A549 (cell line): ENCODE measurements at regions of chr18 and their contacts with region 1.

Region 1: GRCh38 chr18:59697236-59697932 is at the start of gene CCBE1:
- DNase-seq: peak; percentile 42 to 67
- ATAC-seq: peak; percentile 91 to 95
- H3K4me3 ChIP-seq: peak within 1 kb of the TSS; percentile 64
- H3K27ac ChIP-seq: peak within 1 kb of the TSS; percentile 72 to 87
- H3K4me1 ChIP-seq: 0 out of 3 replicates have a peak, but pooled peaks cover 3% of the 10 kb centered on the region
- CTCF ChIP-seq: peak; percentile 83
- EP300 ChIP-seq: no peak
- POLR2A ChIP-seq: no peak
- RAD21 ChIP-seq: peak; percentile 45 to 64
- polyA plus RNA-seq, gene CCBE1: 3.0 and 4.3 TPM in 2 replicates

Region 2: DNA sequence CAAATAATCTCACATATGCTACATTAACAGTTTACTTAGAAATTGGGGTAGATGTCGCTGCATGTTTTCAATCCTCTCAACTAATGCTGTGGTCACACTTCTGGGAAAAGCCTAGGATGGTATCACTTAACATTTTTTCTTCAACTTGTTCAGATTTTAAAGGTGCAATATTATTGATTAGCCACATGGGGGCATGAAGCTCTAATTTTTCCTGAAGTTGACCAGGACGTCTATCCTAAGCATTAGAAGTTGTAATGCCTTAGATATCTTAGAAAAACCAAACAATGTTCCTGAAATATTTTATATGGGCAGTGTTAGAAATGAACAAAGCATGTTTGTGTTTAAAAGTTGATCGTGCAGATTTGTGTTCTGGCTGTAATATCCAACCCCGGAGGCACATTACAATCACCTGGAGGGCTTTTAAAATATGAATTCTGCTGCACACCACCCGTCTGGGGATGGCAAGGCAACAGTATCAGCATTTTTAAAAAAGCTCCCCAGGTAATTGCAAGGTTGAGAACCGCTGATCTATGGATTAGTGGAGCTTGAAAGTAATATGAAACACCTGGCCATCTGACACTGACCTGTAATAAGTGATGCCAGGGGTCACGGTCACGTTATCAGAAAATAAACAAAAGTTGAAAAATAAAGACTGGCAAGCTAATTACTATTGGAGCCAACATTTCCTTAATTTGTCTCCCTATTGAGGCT is 237.9 kb before region 1 on chr18:
- CTCF ChIA-PET with region 1: interaction called, 26 read pairs
- POLR2A ChIA-PET with region 1: no interaction called
- DNase-seq: peak; percentile 17 to 30
- ATAC-seq: peak; percentile 40 to 60; a peak in 3 of 6 replicates
- H3K4me3 ChIP-seq: no peak overlapping the region
- H3K27ac ChIP-seq: no peak overlapping the region
- H3K4me1 ChIP-seq: no peaks in the 10 kb centered on the region
- CTCF ChIP-seq: peak; percentile 56
- EP300 ChIP-seq: no peak
- POLR2A ChIP-seq: no peak
- RAD21 ChIP-seq: peak; percentile 65 to 69

Region 3: DNA sequence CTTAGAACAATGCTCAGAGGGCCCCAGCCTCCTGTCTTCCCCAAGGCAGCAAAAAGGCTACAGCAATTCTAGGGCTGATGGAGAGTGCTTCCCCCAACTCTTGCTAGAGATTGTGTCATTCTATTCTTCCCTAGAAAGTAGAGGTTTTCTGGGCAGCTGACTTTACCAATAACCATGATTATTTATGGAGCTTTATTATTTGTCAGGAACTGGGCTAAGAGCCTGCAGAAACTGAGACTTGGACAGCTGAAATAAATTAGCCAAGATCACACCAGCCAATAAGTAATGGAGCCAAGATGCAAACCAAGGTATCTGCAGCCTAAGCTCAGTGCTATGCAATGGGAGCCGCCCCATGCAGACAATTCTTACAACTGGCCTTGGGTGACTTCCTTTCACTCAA is 85.0 kb before region 1 on chr18:
- CTCF ChIA-PET with region 1: no interaction called
- POLR2A ChIA-PET with region 1: no interaction called
- DNase-seq: no peak
- ATAC-seq: no peak
- H3K4me3 ChIP-seq: no peak overlapping the region
- H3K27ac ChIP-seq: no peak overlapping the region
- H3K4me1 ChIP-seq: no peaks in the 10 kb centered on the region
- CTCF ChIP-seq: no peak
- EP300 ChIP-seq: no peak
- POLR2A ChIP-seq: no peak
- RAD21 ChIP-seq: no peak

Region 4: DNA sequence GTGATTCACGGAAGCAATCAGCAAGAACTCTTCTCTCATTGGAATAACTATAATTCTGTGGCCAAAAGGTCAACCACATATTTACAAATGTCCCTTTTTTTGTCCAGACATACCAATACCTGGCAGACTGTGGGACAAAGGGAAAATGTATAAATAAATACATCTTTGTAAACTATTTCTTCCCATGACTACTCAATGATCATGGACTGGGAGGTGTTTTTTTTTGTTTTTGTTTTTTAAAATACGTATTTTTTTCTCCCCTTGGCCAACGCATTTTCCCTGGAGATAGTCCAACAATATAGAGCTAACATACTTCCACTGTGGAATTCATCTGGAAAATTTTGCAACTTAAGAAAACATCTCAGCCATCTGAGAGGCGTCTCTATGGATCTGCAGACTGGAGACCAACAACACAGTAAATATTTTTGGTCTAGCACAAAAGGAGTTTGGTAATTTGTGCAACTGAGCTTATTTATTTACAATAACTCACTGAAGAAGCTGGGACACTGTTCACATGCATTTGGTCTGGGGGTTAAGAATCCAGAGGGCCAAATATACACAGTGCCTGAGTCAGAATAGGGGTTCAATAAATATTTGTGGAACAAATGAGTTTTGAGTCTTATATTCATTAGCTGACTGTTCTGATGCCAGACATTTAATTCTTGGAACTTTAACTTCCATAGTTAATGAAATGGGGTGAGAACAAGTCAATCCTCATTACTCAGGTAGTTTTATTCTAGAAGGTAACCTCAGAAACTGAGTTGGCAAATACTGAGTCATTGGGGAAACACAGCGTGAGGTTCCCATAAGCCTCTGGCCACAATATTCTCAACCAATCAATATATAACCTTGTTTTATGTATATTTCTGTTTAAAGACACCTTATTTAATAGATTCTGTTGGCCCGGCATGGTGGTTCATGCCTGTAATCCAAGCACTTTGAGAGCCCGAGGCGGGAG is 36.3 kb before region 1 on chr18:
- CTCF ChIA-PET with region 1: interaction called, 13 read pairs
- POLR2A ChIA-PET with region 1: no interaction called
- DNase-seq: no peak
- ATAC-seq: no peak
- H3K4me3 ChIP-seq: no peak overlapping the region
- H3K27ac ChIP-seq: no peak overlapping the region
- H3K4me1 ChIP-seq: peaks cover 4% of the 10 kb centered on the region; the same call in 1 of the 3 replicates
- CTCF ChIP-seq: no peak
- EP300 ChIP-seq: no peak
- POLR2A ChIP-seq: no peak
- RAD21 ChIP-seq: no peak

Region 5: DNA sequence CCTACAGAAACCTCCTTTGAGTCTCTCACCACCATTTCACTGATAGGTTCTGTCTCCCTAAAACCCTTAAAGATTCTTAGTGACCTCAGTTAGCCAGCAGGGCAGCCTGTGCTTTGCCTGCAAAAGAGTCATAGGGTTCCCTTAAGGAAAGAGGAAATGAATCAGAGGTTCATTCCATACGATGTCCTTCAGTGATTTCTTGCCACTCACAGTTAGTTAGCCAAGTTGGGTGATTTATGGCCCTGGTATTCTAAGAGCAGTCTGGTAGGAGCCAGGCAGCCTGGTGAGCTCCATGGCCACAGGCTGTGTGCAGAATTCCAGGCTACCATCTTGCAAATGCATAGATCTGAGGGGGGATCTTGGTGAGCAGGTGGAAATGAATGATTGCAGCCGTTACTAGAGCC is 18.6 kb after region 1 on chr18:
- CTCF ChIA-PET with region 1: interaction called, 70 read pairs
- POLR2A ChIA-PET with region 1: interaction called, 3 read pairs
- DNase-seq: peak; percentile 40 to 70
- ATAC-seq: peak; percentile 81 to 86
- H3K4me3 ChIP-seq: no peak overlapping the region
- H3K27ac ChIP-seq: peak overlapping the region; percentile 70 to 86
- H3K4me1 ChIP-seq: peaks cover 39% of the 10 kb centered on the region
- CTCF ChIP-seq: no peak
- EP300 ChIP-seq: peak in 1 of 2 experiments; percentile 51; a peak in 1 of 5 replicates
- POLR2A ChIP-seq: no peak
- RAD21 ChIP-seq: no peak

Region 6: GRCh38 chr18:59744271-59744721 is 46.9 kb after region 1 on chr18:
- CTCF ChIA-PET with region 1: interaction called, 16 read pairs
- POLR2A ChIA-PET with region 1: interaction called, 3 read pairs
- DNase-seq: peak in 1 of 2 experiments; percentile 54
- ATAC-seq: peak; percentile 84 to 86
- H3K4me3 ChIP-seq: no peak overlapping the region
- H3K27ac ChIP-seq: peak overlapping the region; percentile 62 to 87
- H3K4me1 ChIP-seq: peaks cover 25% of the 10 kb centered on the region; the same call in 2 of the 3 replicates
- CTCF ChIP-seq: no peak
- EP300 ChIP-seq: peak; percentile 50 to 75; a peak in 2 of 5 replicates
- POLR2A ChIP-seq: no peak
- RAD21 ChIP-seq: 0 out of 5 replicates have a peak, but pooled peaks of 1 of the 2 experiments have one; percentile 11

Region 7: DNA sequence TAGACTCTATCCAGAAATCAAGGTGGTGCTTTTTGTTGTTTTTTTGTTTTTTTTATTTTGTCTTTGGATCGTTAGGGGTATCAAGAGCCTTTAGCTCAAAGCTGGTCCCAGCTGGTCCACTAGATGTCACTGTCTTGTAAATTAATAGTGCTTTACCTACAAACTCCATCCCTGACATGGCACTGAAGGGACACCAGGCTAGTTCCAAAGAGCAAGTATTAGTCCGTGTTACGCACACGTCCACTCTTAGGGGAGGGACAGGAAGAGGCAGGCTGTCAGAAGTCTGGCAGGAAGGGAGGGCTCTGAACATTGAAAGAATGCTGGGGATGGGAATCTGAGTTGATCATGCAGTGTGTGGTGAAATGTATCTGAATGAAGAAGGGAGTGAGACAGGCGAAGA is 85.8 kb after region 1 on chr18:
- CTCF ChIA-PET with region 1: interaction called, 17 read pairs
- POLR2A ChIA-PET with region 1: no interaction called
- DNase-seq: peak; percentile 27 to 74
- ATAC-seq: peak; percentile 88 to 92
- H3K4me3 ChIP-seq: no peak overlapping the region
- H3K27ac ChIP-seq: peak overlapping the region; percentile 38 to 69; a peak in 4 of 6 replicates
- H3K4me1 ChIP-seq: peaks cover 25% of the 10 kb centered on the region; the same call in 2 of the 3 replicates
- CTCF ChIP-seq: peak; percentile 52
- EP300 ChIP-seq: no peak
- POLR2A ChIP-seq: no peak
- RAD21 ChIP-seq: peak; percentile 60 to 62

Region 8: DNA sequence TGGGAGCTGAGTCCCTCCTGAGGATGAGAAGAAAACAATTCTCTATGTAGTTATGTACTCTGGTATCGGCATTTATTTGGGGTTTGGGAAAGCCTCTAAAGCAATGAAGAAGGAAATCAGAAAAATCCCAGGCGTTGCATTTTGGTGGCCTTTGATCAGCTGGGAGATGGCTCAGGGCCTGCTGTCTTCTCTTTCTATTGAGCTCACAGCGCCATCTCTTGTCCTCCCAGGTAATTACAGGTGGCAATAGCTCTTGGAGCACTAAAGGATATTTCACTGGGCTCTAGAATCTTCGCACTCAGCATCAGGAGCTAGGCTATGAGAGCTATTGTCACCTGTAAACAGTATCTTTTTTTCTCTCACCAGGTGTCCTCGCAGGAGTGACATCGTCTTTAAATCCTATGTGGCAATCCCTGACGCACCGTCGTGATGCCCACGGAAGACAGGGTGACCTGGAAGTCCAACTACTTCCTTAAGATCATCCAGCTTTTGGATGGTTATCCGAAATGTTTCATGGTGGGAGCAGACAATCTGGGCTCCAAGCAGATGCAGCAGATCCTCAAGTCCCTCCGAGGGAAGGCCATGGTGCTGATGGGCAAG is 126.3 kb after region 1 on chr18:
- CTCF ChIA-PET with region 1: interaction called, 63 read pairs
- POLR2A ChIA-PET with region 1: interaction called, 9 read pairs
- DNase-seq: peak; percentile 27 to 66
- ATAC-seq: peak; percentile 93
- H3K4me3 ChIP-seq: no peak overlapping the region
- H3K27ac ChIP-seq: peak overlapping the region; percentile 33 to 44; a peak in 3 of 6 replicates
- H3K4me1 ChIP-seq: peaks cover 9% of the 10 kb centered on the region; the same call in 1 of the 3 replicates
- CTCF ChIP-seq: peak; percentile 74
- EP300 ChIP-seq: no peak
- POLR2A ChIP-seq: no peak
- RAD21 ChIP-seq: peak; percentile 85 to 86